Activated B cell treated with CpG ODN at 0.5 μM for 24 hours (primary cell): ENCODE measurements at regions of chr4 and their contacts with region 1.

Region 1: GRCh38 chr4:153466081-153466948 is at the start of gene TMEM131L:
- DNase-seq: peak; percentile 67
- ATAC-seq: peak; percentile 47
- H3K4me3 Mint-ChIP-seq: peak within 1 kb of the TSS; percentile 97
- H3K27ac Mint-ChIP-seq: peak within 1 kb of the TSS; percentile 98
- H3K4me1 Mint-ChIP-seq: peaks cover 55% of the 10 kb centered on the region
- H3K27me3 Mint-ChIP-seq: no peaks in the 10 kb centered on the region
- CTCF ChIP-seq: no peak
- total RNA-seq, gene TMEM131L: 170 and 193 TPM in 2 replicates

Region 2: GRCh38 chr4:153344131-153345010 is 121.9 kb before region 1 on chr4 and contains the start of gene MND1:
- CTCF ChIA-PET with region 1: interaction called, 11 read pairs
- POLR2A ChIA-PET with region 1: interaction called, 8 read pairs
- intact Hi-C with region 1: loop called (anchors 1 kb)
- DNase-seq: peak; percentile 91
- ATAC-seq: peak; percentile 93
- H3K4me3 Mint-ChIP-seq: peak within 1 kb of the TSS; percentile 94
- H3K27ac Mint-ChIP-seq: no peak within 1 kb of the TSS
- H3K4me1 Mint-ChIP-seq: peaks cover 44% of the 10 kb centered on the region
- H3K27me3 Mint-ChIP-seq: no peaks in the 10 kb centered on the region
- CTCF ChIP-seq: peak; percentile 72
- total RNA-seq, gene MND1: 0.27 and 0.53 TPM in 2 replicates

Region 3: GRCh38 chr4:153438916-153439756 is 27.2 kb before region 1 on chr4:
- CTCF ChIA-PET with region 1: interaction called, 30 read pairs
- POLR2A ChIA-PET with region 1: interaction called, 97 read pairs
- intact Hi-C with region 1: loop called (anchors 1 kb)
- DNase-seq: peak; percentile 37
- ATAC-seq: peak; percentile 68
- H3K4me3 Mint-ChIP-seq: peak overlapping the region; percentile 83
- H3K27ac Mint-ChIP-seq: peak overlapping the region; percentile 92
- H3K4me1 Mint-ChIP-seq: peaks cover 67% of the 10 kb centered on the region
- H3K27me3 Mint-ChIP-seq: no peaks in the 10 kb centered on the region
- CTCF ChIP-seq: no peak

Region 4: GRCh38 chr4:153488006-153488891 is 21.9 kb after region 1 on chr4:
- CTCF ChIA-PET with region 1: interaction called, 9 read pairs
- POLR2A ChIA-PET with region 1: interaction called, 103 read pairs
- intact Hi-C with region 1: loop called (anchors 1 kb)
- DNase-seq: peak; percentile 62
- ATAC-seq: peak; percentile 76
- H3K4me3 Mint-ChIP-seq: peak overlapping the region; percentile 78
- H3K27ac Mint-ChIP-seq: peak overlapping the region; percentile 92
- H3K4me1 Mint-ChIP-seq: peaks cover 89% of the 10 kb centered on the region
- H3K27me3 Mint-ChIP-seq: no peaks in the 10 kb centered on the region
- CTCF ChIP-seq: no peak

Region 5: GRCh38 chr4:153528705-153529485 is 62.6 kb after region 1 on chr4:
- CTCF ChIA-PET with region 1: interaction called, 5 read pairs
- POLR2A ChIA-PET with region 1: interaction called, 41 read pairs
- intact Hi-C with region 1: no loop called
- DNase-seq: no peak
- ATAC-seq: no peak
- H3K4me3 Mint-ChIP-seq: peak overlapping the region; percentile 56
- H3K27ac Mint-ChIP-seq: peak overlapping the region; percentile 82
- H3K4me1 Mint-ChIP-seq: peaks cover 93% of the 10 kb centered on the region
- H3K27me3 Mint-ChIP-seq: no peaks in the 10 kb centered on the region
- CTCF ChIP-seq: no peak